ENCODE measurements at regions of chr5 and their contacts with region 1.

Region 1: GRCh38 chr5:148730943-148731861 is 76.9 kb upstream of the HTR4 start:
- DNase-seq: peak in 4 of 5 donors; percentile 67 to 95 (median 84)
- H3K4me3 ChIP-seq: no peak overlapping the region
- H3K27ac ChIP-seq: no peak overlapping the region
- H3K4me1 ChIP-seq: no peaks in the 10 kb centered on the region
- H3K27me3 ChIP-seq: no peaks in the 10 kb centered on the region
- CTCF ChIP-seq: peak; percentile 96

Region 2: GRCh38 chr5:148443998-148444397 is 287.2 kb before region 1 on chr5:
- intact Hi-C with region 1: loop called (anchors 10 kb)
- DNase-seq: peak in 3 of 5 donors; percentile 51 to 88 (median 80)
- H3K4me3 ChIP-seq: no peak overlapping the region
- H3K27ac ChIP-seq: no peak overlapping the region
- H3K4me1 ChIP-seq: peaks cover 0 to 5% (median 2%) of the 10 kb centered on the region in 3 donors
- H3K27me3 ChIP-seq: no peaks in the 10 kb centered on the region
- CTCF ChIP-seq: peak; percentile 83

Region 3: GRCh38 chr5:149035372-149035790 is 304.2 kb after region 1 on chr5:
- intact Hi-C with region 1: loop called (anchors 10 kb)
- DNase-seq: peak; percentile 77 to 90 (median 80)
- H3K4me3 ChIP-seq: no peak overlapping the region
- H3K27ac ChIP-seq: no peak overlapping the region
- H3K4me1 ChIP-seq: no peaks in the 10 kb centered on the region
- H3K27me3 ChIP-seq: no peaks in the 10 kb centered on the region
- CTCF ChIP-seq: peak; percentile 74

Region 4: GRCh38 chr5:149128023-149128875 is 397.0 kb after region 1 on chr5:
- intact Hi-C with region 1: loop called (anchors 10 kb)
- DNase-seq: peak in 1 of 5 donors; percentile 29
- H3K4me3 ChIP-seq: no peak overlapping the region
- H3K27ac ChIP-seq: no peak overlapping the region
- H3K4me1 ChIP-seq: no peaks in the 10 kb centered on the region
- H3K27me3 ChIP-seq: no peaks in the 10 kb centered on the region
- CTCF ChIP-seq: peak; percentile 40

Measured in kidney (tissue), 22 donors.